Calu3 (cell line): ENCODE measurements at regions of chr19 and their contacts with region 1.

Region 1: GRCh38 chr19:35135389-35135909 is 590 bp upstream of the LGI4 start:
- DNase-seq: peak; percentile 89
- H3K4me3 Mint-ChIP-seq: no peak overlapping the region
- H3K27ac Mint-ChIP-seq: no peak overlapping the region
- H3K4me1 Mint-ChIP-seq: peaks cover 27% of the 10 kb centered on the region
- H3K27me3 Mint-ChIP-seq: no peaks in the 10 kb centered on the region
- CTCF ChIP-seq: peak; percentile 98

Region 2: GRCh38 chr19:35114353-35115176 is 20.9 kb before region 1 on chr19:
- CTCF ChIA-PET with region 1: interaction called, 13 read pairs
- intact Hi-C with region 1: loop called (anchors 2 kb)
- DNase-seq: peak; percentile 85
- H3K4me3 Mint-ChIP-seq: peak overlapping the region; percentile 74
- H3K27ac Mint-ChIP-seq: peak overlapping the region; percentile 53
- H3K4me1 Mint-ChIP-seq: peaks cover 47% of the 10 kb centered on the region
- H3K27me3 Mint-ChIP-seq: no peaks in the 10 kb centered on the region
- CTCF ChIP-seq: peak; percentile 100